Aorta (tissue), 5 donors: ENCODE measurements at regions of chr9 and their contacts with region 1.

Region 1: DNA sequence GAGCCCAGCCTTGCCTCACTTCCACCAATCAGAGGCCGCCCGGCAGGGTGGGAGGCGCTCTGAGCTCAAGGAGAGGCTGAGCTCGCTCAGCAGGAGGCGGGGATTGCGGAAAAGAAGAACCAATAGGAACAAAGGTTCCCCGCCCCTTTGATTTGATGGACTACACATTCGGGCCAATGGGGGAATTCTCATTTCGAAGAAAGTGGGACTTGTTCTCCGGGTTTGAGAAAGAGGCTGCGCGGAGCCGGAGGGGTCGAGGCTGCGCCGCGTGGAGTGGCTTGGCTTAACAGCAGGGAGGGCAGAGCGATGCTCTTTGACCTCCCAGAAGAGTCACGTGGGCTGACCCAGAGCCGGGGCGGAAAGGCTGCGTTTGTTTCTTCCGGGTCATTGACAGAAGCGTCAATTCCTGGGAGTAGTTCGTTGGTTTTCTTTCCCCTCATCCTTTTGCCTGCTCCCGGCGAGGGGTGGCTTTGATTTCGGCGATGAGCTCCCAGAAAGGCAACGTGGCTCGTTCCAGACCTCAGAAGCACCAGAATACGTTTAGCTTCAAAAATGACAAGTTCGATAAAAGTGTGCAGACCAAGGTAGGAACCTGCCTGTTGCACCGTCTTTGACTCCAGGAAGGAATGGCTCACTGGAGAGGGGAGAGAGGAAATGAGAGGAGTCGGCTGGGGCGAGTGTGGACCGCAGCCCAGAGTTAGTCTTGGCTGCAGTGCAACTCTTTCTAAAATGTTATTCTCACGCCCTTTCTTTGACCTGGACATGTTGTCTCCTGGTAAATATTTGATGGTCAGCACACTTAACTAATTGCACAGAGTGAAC is at the start of gene C9orf85:
- DNase-seq: peak; percentile 99
- ATAC-seq: peak; percentile 99
- H3K4me3 ChIP-seq: peak within 1 kb of the TSS; percentile 89 to 97
- H3K27ac ChIP-seq: peak within 1 kb of the TSS; percentile 52 to 84
- H3K4me1 ChIP-seq: peaks cover 0 to 5% of the 10 kb centered on the region in 2 donors
- H3K27me3 ChIP-seq: no peaks in the 10 kb centered on the region
- total RNA-seq, gene C9orf85: 15.5 to 17.9 TPM

Region 2: GRCh38 chr9:71812385-71812784 is 99.1 kb before region 1 on chr9:
- intact Hi-C with region 1: loop called in 1 of 2 experiments (anchors 5 kb)
- DNase-seq: peak in 1 of 2 donors; percentile 61
- ATAC-seq: peak; percentile 80
- H3K4me3 ChIP-seq: no peak overlapping the region
- H3K27ac ChIP-seq: peak overlapping the region in 1 of 2 donors; percentile 74
- H3K4me1 ChIP-seq: peaks cover 6 to 8% of the 10 kb centered on the region in 2 donors
- H3K27me3 ChIP-seq: no peaks in the 10 kb centered on the region

Region 3: DNA sequence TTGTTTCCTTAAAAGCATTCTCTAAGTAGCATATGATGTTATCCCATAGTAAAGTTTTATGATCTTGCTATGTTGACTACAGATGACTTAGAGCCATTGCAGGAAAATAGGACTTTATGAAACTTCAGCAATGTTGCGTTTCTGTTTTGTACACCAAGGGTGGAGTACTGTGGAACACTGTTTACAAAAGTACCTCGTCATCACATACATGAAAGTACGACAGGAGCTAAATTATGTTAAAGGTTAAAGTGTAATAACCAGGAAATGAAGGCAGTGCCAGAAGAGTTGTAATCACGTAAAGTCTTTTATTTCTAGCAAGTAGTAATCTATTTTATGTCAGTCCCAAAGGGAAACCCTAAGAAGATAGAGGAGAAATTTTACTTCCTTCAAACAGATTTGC is 50.9 kb after region 1 on chr9:
- intact Hi-C with region 1: no loop called
- DNase-seq: no peak
- ATAC-seq: no peak
- H3K4me3 ChIP-seq: no peak overlapping the region
- H3K27ac ChIP-seq: no peak overlapping the region
- H3K4me1 ChIP-seq: no peaks in the 10 kb centered on the region
- H3K27me3 ChIP-seq: no peaks in the 10 kb centered on the region